ENCODE measurements at regions of chrX and their contacts with region 1.

Region 1: GRCh38 chrX:51641421-51642021 is 22.8 kb upstream of the CENPVL3 start:
- DNase-seq: peak; percentile 62
- H3K4me3 ChIP-seq: no peak overlapping the region
- H3K4me1 ChIP-seq: no peaks in the 10 kb centered on the region
- H3K27me3 ChIP-seq: 0 out of 2 replicates have a peak, but pooled peaks cover 2% of the 10 kb centered on the region

Region 2: DNA sequence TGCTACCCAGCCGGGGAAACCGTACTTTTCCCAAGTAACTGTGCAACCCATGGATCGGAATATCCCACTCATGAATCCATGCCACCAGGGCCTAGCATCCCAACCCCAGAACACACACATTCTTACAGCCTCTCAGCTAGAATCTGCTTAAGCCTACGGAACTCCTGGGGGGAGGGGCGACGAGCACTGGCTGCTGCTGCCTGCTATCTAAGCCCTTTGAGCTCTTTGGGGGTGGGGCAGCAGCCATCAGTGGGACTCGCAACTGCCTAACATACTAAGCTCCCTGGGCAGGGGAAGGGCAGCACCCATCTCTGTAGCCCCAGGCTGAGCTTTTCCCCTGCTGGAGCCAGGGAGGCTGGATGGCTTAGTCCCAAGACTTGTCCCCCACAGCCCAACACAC is 280.3 kb before region 1 on chrX:
- in situ Hi-C with region 1: no loop called
- DNase-seq: no peak
- H3K4me3 ChIP-seq: no peak overlapping the region
- H3K4me1 ChIP-seq: peaks cover 5% of the 10 kb centered on the region; the same call in 1 of the 2 replicates
- H3K27me3 ChIP-seq: no peaks in the 10 kb centered on the region

Region 3: GRCh38 chrX:51476930-51477329 is 164.6 kb before region 1 on chrX:
- in situ Hi-C with region 1: no loop called
- DNase-seq: no peak
- H3K4me3 ChIP-seq: no peak overlapping the region
- H3K4me1 ChIP-seq: peaks cover 5% of the 10 kb centered on the region
- H3K27me3 ChIP-seq: no peaks in the 10 kb centered on the region

Region 4: DNA sequence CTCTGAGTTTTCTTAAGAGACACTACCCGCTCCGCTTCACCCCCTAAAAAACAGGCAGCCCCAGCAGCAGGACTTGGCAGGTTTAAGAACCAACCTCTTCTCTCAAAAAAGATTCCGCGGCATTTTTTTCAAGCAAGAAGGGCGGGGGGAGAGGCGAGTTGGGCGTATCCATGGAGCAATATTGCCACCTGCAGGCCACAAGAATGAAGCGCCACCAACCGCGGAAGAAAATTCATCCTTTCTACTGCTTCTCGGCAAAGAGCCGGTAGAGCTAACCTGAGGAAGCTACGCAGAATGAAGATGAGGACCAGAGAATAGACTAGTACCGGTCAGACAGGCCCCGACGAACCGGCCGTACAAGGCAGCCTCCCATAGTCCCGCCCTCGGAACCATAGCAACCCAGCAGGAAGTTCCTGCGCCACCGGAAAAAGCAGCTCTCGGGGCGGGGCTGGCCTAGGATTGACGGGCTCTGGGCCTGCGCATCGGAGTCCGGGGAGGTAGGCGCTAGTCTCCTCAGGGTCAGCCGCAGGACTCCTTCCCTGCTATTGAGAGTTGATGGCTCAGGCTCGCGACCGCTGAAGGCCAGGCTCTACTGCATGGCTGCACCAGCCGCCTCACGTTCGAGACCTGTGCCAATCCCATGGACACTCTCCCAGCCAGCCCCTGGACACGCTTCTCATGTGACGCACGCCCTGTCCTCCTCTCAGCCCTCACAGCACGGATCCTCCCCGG is 620.1 kb after region 1 on chrX:
- in situ Hi-C with region 1: loop called (anchors 25 kb)
- DNase-seq: peak; percentile 78 to 97
- H3K4me3 ChIP-seq: peak overlapping the region; percentile 56
- H3K4me1 ChIP-seq: peaks cover 9% of the 10 kb centered on the region
- H3K27me3 ChIP-seq: no peaks in the 10 kb centered on the region

Measured in HAP-1 (cell line).